Stomach (tissue), 19 donors: ENCODE measurements at regions of chr2 and their contacts with region 1.

Region 1: GRCh38 chr2:45497355-45497754 is 113.7 kb downstream of the SRBD1 start:
- DNase-seq: no peak
- H3K4me3 ChIP-seq: no peak overlapping the region
- H3K27ac ChIP-seq: no peak overlapping the region
- H3K4me1 ChIP-seq: peaks cover 0 to 8% (median 3%) of the 10 kb centered on the region in 4 donors
- H3K27me3 ChIP-seq: no peaks in the 10 kb centered on the region
- CTCF ChIP-seq: no peak
- EP300 ChIP-seq: no peak
- POLR2A ChIP-seq: no peak

Region 2: DNA sequence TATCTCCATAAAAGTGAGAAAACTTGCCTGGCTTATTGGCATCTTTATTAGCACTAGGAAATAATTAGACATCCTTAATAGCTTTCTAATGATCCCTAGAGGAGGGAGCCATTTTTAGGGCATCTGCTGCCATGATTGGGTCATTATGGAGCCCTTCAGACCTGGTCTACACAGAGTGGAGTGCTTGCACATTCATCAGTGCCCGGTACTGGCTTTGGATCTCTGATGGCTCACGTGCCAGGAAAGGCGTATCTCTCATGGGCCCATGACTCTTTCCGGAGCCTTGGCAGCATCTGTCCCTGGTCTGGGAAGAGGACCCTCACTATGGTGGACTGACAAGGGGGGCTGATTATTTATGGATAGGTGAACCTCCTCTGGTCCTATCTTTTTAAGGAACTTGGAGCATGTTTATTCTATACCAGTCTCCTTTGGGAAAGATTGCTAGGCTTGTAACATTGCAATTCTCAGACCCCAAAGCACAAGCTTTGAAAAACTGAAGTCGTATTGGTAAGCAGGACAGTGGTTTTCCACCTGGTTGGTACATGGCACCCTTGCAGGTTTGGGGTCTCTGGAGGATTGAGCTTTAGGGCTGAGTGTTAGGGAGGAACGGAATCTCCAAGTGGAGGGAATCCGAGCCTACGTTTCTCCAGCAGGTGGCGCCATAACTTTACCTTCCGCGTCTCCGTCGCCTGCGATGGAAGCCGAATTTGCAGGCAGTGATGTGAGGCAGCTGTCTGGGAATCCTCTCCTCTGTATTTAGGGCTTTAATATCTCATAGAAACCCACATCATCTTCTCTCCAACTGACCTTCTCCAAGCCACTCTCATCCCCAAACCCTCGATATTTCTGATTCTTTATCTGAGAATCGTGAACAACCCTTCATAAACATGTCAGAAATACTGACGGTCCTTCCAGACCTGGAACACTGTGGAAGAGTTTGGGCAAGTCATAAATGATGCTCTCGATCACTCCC is 515.9 kb before region 1 on chr2:
- intact Hi-C with region 1: loop called (anchors 5 kb)
- DNase-seq: peak; percentile 78 to 92
- H3K4me3 ChIP-seq: no peak overlapping the region
- H3K27ac ChIP-seq: no peak overlapping the region
- H3K4me1 ChIP-seq: peaks cover 0 to 5% (median 0%) of the 10 kb centered on the region in 4 donors
- H3K27me3 ChIP-seq: peaks cover 0 to 35% (median 0%) of the 10 kb centered on the region in 3 donors
- CTCF ChIP-seq: peak in 6 of 7 experiments; percentile 33 to 87 (median 81)
- EP300 ChIP-seq: no peak
- POLR2A ChIP-seq: no peak